T-cell (primary cell): ENCODE measurements at regions of chr7 and their contacts with region 1.

Region 1: GRCh38 chr7:121994625-121995410 is 121.9 kb downstream of the PTPRZ1 start:
- DNase-seq: peak in 20 of 35 experiments; percentile 0 to 32 (median 7)
- ATAC-seq: peak in 1 of 4 experiments; percentile 43
- H3K4me3 ChIP-seq: no peak overlapping the region
- H3K4me3 Mint-ChIP-seq: no peak overlapping the region
- H3K27ac ChIP-seq: no peak overlapping the region
- H3K27ac Mint-ChIP-seq: no peak overlapping the region
- H3K4me1 ChIP-seq: no peaks in the 10 kb centered on the region
- H3K4me1 Mint-ChIP-seq: no peaks in the 10 kb centered on the region
- H3K27me3 ChIP-seq: no peaks in the 10 kb centered on the region
- H3K27me3 Mint-ChIP-seq: no peaks in the 10 kb centered on the region

Region 2: DNA sequence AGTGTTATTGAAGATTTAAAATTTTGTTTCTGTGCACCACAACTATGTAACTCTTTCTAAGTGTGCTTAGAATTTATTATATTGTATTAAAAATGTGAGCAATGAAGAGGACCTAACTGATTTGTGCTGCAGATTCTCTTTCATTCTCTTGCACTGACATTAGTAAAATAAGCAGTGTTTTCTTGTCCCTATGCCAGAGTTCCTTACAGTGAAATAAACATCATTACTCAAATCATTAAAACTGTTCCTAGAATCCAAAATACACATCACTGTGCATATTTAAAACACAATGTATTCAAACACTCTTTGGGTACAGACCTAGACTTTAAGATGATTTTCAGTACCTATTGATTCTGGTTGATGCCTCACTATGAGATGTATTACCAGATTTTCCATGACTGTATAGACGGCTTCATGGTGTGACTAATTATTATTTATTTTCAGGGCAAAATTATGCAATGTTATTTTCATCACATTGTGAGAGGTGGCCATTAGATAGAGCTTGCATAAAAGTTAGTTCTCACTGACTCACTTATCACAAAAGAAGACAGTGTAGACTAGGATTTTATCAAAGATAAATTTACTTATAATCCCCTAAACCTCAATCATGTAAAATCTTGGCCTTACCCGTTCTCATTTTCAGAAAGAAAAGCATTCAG is 28.4 kb before region 1 on chr7:
- CTCF ChIA-PET with region 1: interaction called in 1 of 2 experiments, 10 read pairs
- POLR2A ChIA-PET with region 1: interaction called in 1 of 2 experiments, 7 read pairs
- DNase-seq: no peak
- ATAC-seq: no peak
- H3K4me3 ChIP-seq: no peak overlapping the region
- H3K4me3 Mint-ChIP-seq: no peak overlapping the region
- H3K27ac ChIP-seq: no peak overlapping the region
- H3K27ac Mint-ChIP-seq: no peak overlapping the region
- H3K4me1 ChIP-seq: no peaks in the 10 kb centered on the region
- H3K4me1 Mint-ChIP-seq: no peaks in the 10 kb centered on the region
- H3K27me3 ChIP-seq: no peaks in the 10 kb centered on the region
- H3K27me3 Mint-ChIP-seq: no peaks in the 10 kb centered on the region

Region 3: GRCh38 chr7:122006687-122007086 is 11.9 kb after region 1 on chr7:
- CTCF ChIA-PET with region 1: interaction called in 1 of 2 experiments, 10 read pairs
- POLR2A ChIA-PET with region 1: no interaction called
- DNase-seq: no peak
- ATAC-seq: no peak
- H3K4me3 ChIP-seq: no peak overlapping the region
- H3K4me3 Mint-ChIP-seq: no peak overlapping the region
- H3K27ac ChIP-seq: no peak overlapping the region
- H3K27ac Mint-ChIP-seq: no peak overlapping the region
- H3K4me1 ChIP-seq: no peaks in the 10 kb centered on the region
- H3K4me1 Mint-ChIP-seq: no peaks in the 10 kb centered on the region
- H3K27me3 ChIP-seq: no peaks in the 10 kb centered on the region
- H3K27me3 Mint-ChIP-seq: no peaks in the 10 kb centered on the region

Region 4: GRCh38 chr7:122067077-122067476 is 72.3 kb after region 1 on chr7:
- CTCF ChIA-PET with region 1: no interaction called
- POLR2A ChIA-PET with region 1: no interaction called
- DNase-seq: no peak
- ATAC-seq: no peak
- H3K4me3 ChIP-seq: no peak overlapping the region
- H3K4me3 Mint-ChIP-seq: no peak overlapping the region
- H3K27ac ChIP-seq: no peak overlapping the region
- H3K27ac Mint-ChIP-seq: no peak overlapping the region
- H3K4me1 ChIP-seq: no peaks in the 10 kb centered on the region
- H3K4me1 Mint-ChIP-seq: no peaks in the 10 kb centered on the region
- H3K27me3 ChIP-seq: no peaks in the 10 kb centered on the region
- H3K27me3 Mint-ChIP-seq: peaks cover 0 to 4% of the 10 kb centered on the region in 2 donors

Region 5: DNA sequence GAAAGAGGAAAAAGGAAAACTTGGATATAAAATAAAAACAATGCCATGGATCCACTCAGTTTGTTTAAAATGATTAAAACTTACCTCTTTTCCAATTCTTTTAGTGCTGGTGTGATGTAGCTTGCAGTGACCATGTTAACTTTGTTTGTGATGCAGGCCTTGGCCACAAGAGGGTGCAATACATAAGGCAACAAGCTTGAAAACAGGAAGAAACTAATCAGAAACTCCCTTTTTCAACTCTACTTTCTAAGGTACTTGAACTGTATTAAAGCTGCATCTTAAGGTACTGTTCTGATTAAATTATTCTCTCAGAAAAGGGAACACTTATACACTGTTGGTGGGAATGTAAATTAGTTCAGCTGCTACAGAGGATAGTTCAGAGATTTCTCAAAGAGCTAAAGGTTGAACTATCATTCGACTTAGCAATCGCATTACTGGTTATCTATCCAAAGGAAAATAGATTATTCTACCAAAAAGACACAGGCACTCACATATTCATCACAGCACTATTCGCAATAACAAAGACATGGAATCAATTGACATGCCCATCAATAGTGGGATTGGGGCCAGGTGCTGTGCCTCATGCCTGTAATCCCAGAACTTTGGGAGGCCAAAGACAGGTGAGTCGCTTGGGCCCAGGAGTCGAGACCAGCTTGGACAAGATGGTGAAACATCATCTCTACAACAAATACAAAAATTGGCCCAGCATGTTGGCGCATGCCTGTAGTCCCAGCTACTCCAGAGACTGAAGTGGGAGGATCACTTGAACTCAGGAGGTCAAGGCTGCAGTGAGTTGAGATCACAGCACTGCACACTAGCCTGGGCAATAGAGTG is 98.4 kb after region 1 on chr7:
- CTCF ChIA-PET with region 1: no interaction called
- POLR2A ChIA-PET with region 1: interaction called in 1 of 2 experiments, 14 read pairs
- DNase-seq: peak in 32 of 35 experiments; percentile 5 to 65 (median 34)
- ATAC-seq: peak in 3 of 4 experiments; percentile 34 to 43 (median 41)
- H3K4me3 ChIP-seq: no peak overlapping the region
- H3K4me3 Mint-ChIP-seq: no peak overlapping the region
- H3K27ac ChIP-seq: no peak overlapping the region
- H3K27ac Mint-ChIP-seq: peak overlapping the region in 1 of 2 donors; percentile 44
- H3K4me1 ChIP-seq: no peaks in the 10 kb centered on the region
- H3K4me1 Mint-ChIP-seq: peaks cover 0 to 4% (median 0%) of the 10 kb centered on the region in 3 donors
- H3K27me3 ChIP-seq: no peaks in the 10 kb centered on the region
- H3K27me3 Mint-ChIP-seq: no peaks in the 10 kb centered on the region